Activated CD4-positive, alpha-beta T cell treated with anti-CD3 and anti-CD28 coated beads, Interleukin-2, amount 10 ng/mL, durations not matched to agents 7 days and 5 days (primary cell): ENCODE measurements at regions of chr2 and their contacts with region 1.

Region 1: DNA sequence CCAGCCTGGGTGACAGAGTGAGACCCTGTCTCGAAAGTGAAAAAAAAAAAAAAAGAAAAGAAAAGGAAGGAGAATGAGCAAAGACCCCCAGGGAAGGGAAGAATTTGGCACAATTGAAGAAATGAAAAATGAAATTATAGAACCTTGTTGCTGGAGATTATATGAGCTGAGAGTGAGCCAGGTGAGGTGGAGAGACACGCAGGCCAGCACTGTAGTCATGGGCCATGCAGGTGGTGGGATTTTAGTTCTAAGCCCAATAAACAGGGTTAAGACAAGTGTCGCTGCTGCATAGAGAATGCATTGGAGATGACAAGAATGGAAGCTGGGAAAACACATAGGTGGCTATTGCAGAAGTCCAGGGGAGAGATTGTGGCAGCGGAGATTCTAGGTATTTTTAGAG is 32.3 kb downstream of the FBLN7 start:
- DNase-seq: no peak
- H3K4me3 Mint-ChIP-seq: no peak overlapping the region
- H3K27ac Mint-ChIP-seq: no peak overlapping the region
- H3K4me1 Mint-ChIP-seq: peaks cover 21% of the 10 kb centered on the region
- H3K27me3 Mint-ChIP-seq: no peaks in the 10 kb centered on the region

Region 2: DNA sequence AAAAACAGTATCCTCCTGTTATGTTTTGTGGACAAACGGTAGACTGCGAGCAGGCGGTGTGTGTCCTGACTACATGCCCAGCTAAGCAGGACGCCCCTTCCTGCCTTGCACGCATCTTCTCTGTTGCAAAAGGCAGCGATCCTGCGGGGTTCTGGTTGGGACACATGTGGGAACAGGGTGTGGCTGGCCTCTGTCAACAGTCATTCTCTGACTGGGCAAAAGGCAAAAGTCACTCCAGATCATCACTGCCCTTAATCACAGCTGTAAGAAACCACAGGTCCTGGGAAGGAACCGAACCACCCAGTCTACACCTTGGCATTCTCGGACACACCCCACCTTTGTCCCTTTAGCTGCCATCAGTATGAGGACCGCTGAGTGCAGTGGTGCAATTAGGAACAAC is 159.7 kb before region 1 on chr2:
- CTCF ChIA-PET with region 1: no interaction called
- POLR2A ChIA-PET with region 1: no interaction called
- DNase-seq: no peak
- H3K4me3 Mint-ChIP-seq: no peak overlapping the region
- H3K27ac Mint-ChIP-seq: no peak overlapping the region
- H3K4me1 Mint-ChIP-seq: no peaks in the 10 kb centered on the region
- H3K27me3 Mint-ChIP-seq: peaks cover 1% of the 10 kb centered on the region

Region 3: GRCh38 chr2:112147382-112148168 is 22.9 kb before region 1 on chr2:
- CTCF ChIA-PET with region 1: no interaction called
- POLR2A ChIA-PET with region 1: no interaction called
- DNase-seq: no peak
- H3K4me3 Mint-ChIP-seq: no peak overlapping the region
- H3K27ac Mint-ChIP-seq: no peak overlapping the region
- H3K4me1 Mint-ChIP-seq: no peaks in the 10 kb centered on the region
- H3K27me3 Mint-ChIP-seq: peaks cover 5% of the 10 kb centered on the region

Region 4: GRCh38 chr2:112181571-112182290 is 11.2 kb after region 1 on chr2:
- CTCF ChIA-PET with region 1: interaction called, 29 read pairs
- POLR2A ChIA-PET with region 1: no interaction called
- DNase-seq: peak; percentile 50
- H3K4me3 Mint-ChIP-seq: peak overlapping the region; percentile 78
- H3K27ac Mint-ChIP-seq: peak overlapping the region; percentile 90
- H3K4me1 Mint-ChIP-seq: peaks cover 47% of the 10 kb centered on the region
- H3K27me3 Mint-ChIP-seq: peaks cover 2% of the 10 kb centered on the region

Region 5: DNA sequence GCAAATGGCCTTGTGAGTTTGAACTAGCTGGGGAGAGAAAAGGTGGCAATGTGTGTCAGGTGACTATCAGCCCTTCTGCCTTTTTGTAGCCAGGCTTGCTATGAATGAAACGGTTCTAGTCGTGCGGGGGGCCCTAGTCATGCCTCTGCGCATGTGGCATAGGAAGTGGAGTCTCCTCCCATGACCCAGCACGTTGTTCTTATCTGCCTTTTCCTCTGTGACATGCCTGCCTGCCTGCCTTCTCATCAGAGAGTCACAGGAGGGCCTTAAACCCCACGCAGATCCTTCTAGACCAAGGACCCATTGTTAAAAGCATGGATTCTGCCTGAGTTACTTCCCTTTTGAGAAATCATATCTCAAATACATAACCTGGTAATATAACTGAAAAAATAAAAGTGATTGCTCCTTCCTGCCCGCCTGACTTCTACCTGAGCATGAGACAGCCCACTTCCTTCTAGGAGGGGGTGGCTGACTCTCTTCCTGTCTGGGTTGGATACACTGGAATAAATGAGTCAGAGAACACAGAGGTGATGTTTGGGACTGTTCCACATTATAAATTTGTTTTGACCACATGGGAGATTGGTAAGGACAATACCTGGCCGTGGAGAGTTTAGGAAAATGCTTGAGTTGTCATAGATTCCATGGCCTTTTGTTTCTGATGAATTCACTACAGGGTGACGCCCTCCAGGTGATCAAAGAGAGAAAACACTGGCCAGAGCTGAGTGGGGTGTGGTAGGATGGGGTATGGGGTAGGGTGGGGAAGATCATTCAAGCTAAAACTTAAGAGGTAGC is 17.5 kb after region 1 on chr2:
- CTCF ChIA-PET with region 1: interaction called, 29 read pairs
- POLR2A ChIA-PET with region 1: no interaction called
- DNase-seq: peak; percentile 82
- H3K4me3 Mint-ChIP-seq: peak overlapping the region; percentile 49
- H3K27ac Mint-ChIP-seq: peak overlapping the region; percentile 98
- H3K4me1 Mint-ChIP-seq: peaks cover 79% of the 10 kb centered on the region
- H3K27me3 Mint-ChIP-seq: no peaks in the 10 kb centered on the region

Region 6: DNA sequence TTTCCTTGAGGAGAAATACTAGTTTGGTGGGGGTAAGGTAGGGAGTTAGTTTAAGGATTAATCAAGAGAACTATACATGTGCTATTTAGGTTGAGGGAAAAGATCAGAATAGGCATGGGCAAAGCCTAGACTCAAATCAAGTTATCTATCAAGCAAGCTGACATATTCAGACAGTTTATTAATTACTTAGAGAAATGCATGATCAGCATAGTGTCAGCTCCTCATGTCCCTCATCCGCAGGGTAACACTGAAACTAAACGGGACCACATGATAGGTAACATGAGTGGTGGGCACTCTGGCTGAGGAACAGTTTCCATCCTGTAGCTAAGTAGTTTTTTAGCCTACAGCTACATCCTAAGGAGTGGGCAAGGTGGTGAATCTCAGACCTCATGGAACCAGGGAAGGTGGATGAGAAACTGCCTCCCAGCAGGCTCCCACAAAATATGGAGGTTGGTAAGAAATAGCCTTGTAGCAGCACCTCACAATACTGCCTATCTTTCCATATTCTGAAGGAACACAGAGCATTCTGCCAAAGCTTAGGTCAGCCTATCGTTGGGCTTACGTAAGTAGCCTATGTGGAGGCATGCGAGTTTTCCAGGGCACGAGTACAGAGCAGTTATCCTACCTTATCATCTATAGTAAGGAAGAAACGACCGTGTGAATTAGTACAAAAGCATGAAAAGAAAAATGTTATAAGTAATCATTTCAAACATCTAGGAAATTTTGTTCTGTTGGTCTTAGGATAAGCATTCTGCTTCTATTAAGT is 123.3 kb after region 1 on chr2:
- CTCF ChIA-PET with region 1: no interaction called
- POLR2A ChIA-PET with region 1: no interaction called
- DNase-seq: no peak
- H3K4me3 Mint-ChIP-seq: no peak overlapping the region
- H3K27ac Mint-ChIP-seq: no peak overlapping the region
- H3K4me1 Mint-ChIP-seq: peaks cover 2% of the 10 kb centered on the region
- H3K27me3 Mint-ChIP-seq: no peaks in the 10 kb centered on the region